BJ (cell line): ENCODE measurements at regions of chr2 and their contacts with region 1.

Region 1: DNA sequence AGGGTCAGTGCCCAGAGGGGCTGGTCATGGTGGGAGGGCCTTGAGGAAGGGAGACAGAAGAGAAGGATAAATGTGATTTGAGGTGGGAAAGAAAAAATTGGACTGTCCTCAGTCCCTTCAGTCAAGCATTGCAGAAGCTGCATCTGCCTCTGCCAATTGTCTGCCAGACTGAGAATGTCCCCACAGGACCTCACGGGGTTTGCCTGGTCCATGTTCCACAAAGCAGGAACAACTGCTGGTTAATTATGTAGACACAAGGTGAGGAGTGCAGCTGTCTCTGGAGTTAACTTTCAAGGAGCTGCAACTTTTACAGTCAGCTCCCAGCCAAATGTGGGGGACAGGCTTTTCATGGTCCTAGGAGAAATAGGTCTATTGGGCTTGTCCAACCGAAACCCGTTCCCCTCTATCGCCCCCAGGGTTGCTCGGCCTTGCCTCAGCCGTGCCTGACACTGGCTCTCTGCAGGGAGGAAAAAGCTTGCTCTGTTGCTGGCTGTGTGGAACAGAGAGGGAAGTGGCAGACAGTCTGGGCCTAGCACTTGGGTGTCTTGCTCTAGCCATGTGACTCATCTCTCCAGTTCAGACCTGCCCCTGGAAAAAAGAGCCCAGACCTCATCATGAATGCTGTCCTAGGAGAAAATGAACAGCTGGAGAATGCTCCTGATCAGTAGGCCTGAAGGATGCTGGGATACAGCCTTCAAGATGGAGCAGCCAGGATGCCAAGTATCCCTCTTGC is 31.1 kb upstream of the PAX8 start:
- DNase-seq: no peak
- H3K4me3 ChIP-seq: no peak overlapping the region
- H3K27me3 ChIP-seq: no peaks in the 10 kb centered on the region; the same call in 1 of the 2 replicates
- CTCF ChIP-seq: no peak

Region 2: DNA sequence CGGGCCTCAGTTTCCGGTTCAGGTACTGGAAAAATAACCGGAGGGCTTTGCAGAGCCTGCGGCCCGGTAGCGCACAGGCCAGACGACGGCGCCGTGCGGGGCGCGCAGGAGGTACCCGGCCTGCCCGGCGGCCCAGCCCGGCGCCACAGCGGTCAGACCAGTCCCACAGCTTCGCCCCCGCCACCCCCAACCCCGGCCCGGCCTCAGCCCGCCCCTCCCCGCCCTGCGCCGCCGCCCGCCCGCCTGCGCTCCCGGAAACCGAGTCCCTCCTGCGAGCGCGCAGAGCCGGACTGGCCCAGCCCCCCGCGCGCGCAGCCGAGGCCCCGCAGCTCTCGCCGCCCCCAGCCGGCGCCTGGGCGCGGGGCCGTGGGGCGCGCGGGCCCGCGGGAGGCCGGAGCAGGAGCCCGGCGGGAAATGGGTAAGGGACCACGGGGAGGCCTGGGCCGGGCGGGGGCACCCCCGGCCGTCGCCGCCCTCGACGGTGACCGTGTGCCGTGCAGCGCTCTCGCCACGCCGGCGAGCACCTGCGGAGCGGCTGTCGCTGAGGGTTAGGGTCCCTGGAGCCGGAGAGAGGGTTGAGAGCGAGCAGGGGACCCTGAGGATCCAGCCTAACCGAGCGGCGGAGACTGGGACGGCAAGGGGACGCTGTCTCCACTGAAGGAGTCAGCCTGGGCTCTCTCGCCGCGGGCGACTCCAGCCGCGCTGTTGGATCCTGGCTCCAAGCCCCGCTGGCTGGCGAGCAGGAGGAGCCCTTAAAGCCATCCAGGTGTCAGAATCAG is 152.5 kb before region 1 on chr2:
- CTCF ChIA-PET with region 1: no interaction called
- POLR2A ChIA-PET with region 1: no interaction called
- DNase-seq: no peak
- H3K4me3 ChIP-seq: peak overlapping the region; percentile 37
- H3K27me3 ChIP-seq: no peaks in the 10 kb centered on the region; the same call in 1 of the 2 replicates
- CTCF ChIP-seq: no peak

Region 3: DNA sequence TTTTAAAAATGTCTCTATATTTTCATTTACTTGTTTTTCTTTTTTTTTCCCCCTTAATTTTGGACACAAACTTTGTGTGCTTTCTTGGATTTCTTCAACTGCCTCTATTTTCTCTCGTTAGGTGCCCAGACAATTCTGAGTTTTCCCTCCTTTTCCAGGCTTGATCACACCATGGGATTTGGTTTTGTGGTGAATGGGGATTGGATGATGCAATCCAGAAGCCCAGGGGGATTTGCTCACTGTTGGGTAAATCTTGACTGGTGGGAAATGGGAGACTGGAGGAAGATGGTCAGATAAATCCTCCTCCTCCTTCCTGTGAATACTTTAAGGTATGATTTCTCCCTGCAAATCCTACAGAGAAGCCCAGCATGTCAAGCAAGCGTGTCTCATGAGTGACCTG is 11.6 kb before region 1 on chr2:
- CTCF ChIA-PET with region 1: interaction called, 11 read pairs
- POLR2A ChIA-PET with region 1: no interaction called
- DNase-seq: no peak
- H3K4me3 ChIP-seq: no peak overlapping the region
- H3K27me3 ChIP-seq: no peaks in the 10 kb centered on the region
- CTCF ChIP-seq: no peak

Region 4: DNA sequence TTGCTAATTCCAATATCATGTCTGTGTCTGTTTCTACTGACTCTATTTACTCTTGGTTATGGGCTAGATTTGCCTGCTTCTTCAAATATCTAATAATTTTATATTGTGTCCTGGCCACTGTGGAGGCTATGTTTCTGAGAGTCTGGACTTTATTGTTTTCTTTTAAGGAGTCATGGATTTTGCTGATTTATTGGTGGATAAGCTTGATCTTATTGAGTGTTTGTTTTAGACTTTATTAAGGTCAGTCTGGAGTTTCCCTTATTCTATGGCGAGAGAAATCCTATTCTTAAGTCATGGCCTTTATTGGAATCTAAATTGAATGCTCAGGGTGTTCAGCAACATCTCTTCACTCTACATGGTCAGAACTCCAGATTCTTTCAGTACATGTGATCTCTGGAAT is 72.7 kb after region 1 on chr2:
- CTCF ChIA-PET with region 1: no interaction called
- POLR2A ChIA-PET with region 1: no interaction called
- DNase-seq: no peak
- H3K4me3 ChIP-seq: no peak overlapping the region
- H3K27me3 ChIP-seq: no peaks in the 10 kb centered on the region
- CTCF ChIP-seq: no peak